Natural killer cell (primary cell): ENCODE measurements at regions of chr22 and their contacts with region 1.

Region 1: GRCh38 chr22:29040385-29041275 is 21.0 kb downstream of the C22orf31 start:
- DNase-seq: peak; percentile 45 to 87
- ATAC-seq: peak; percentile 83 to 89 (median 87)
- H3K4me3 ChIP-seq: no peak overlapping the region
- H3K4me3 Mint-ChIP-seq: no peak overlapping the region
- H3K27ac ChIP-seq: no peak overlapping the region
- H3K27ac Mint-ChIP-seq: no peak overlapping the region
- H3K4me1 ChIP-seq: no peaks in the 10 kb centered on the region
- H3K4me1 Mint-ChIP-seq: peaks cover 0 to 14% of the 10 kb centered on the region in 2 donors
- H3K27me3 ChIP-seq: no peaks in the 10 kb centered on the region
- H3K27me3 Mint-ChIP-seq: peaks cover 15 to 16% of the 10 kb centered on the region in 2 donors
- CTCF ChIP-seq: peak; percentile 97

Region 2: GRCh38 chr22:28019881-28020871 is 1020.5 kb before region 1 on chr22:
- intact Hi-C with region 1: loop called (anchors 10 kb)
- DNase-seq: peak; percentile 52 to 74
- ATAC-seq: peak; percentile 67 to 90 (median 80)
- H3K4me3 ChIP-seq: no peak overlapping the region
- H3K4me3 Mint-ChIP-seq: no peak overlapping the region
- H3K27ac ChIP-seq: no peak overlapping the region
- H3K27ac Mint-ChIP-seq: peak overlapping the region in 1 of 2 donors; percentile 47
- H3K4me1 ChIP-seq: no peaks in the 10 kb centered on the region
- H3K4me1 Mint-ChIP-seq: peaks cover 5 to 6% of the 10 kb centered on the region in 2 donors
- H3K27me3 ChIP-seq: no peaks in the 10 kb centered on the region
- H3K27me3 Mint-ChIP-seq: peaks cover 0 to 3% of the 10 kb centered on the region in 2 donors
- CTCF ChIP-seq: peak; percentile 76

Region 3: DNA sequence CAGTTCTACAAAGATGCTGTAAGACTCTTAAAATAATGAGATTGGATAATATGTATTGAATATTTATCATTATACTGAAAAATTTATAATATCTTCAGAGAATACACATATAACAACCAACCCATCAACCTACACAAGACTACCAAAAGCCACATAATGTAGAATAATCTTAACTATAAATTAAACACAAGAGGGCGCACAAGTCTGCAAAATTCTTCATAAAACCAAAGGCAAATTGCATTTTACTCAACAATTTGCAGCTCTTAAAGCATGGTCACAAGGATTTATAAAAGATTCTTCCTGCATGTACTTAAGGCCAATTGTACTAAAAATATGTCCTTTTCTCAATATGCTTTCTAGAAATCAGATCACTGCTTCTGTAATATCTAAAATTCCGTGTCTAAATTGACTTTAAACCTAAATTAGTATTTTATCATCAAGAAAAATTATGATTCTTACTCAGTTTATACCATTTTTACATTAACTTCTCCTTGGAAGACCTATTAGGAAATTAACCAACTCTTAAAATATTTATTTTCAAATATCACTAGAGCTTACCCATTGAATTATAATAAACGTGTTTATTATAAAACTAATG is 440.0 kb before region 1 on chr22:
- intact Hi-C with region 1: loop called (anchors 1 kb)
- DNase-seq: peak in 1 of 2 donors; percentile 73
- ATAC-seq: peak in 2 of 3 donors; percentile 34 to 53
- H3K4me3 ChIP-seq: no peak overlapping the region
- H3K4me3 Mint-ChIP-seq: no peak overlapping the region
- H3K27ac ChIP-seq: no peak overlapping the region
- H3K27ac Mint-ChIP-seq: no peak overlapping the region
- H3K4me1 ChIP-seq: no peaks in the 10 kb centered on the region
- H3K4me1 Mint-ChIP-seq: no peaks in the 10 kb centered on the region
- H3K27me3 ChIP-seq: peaks cover 2% of the 10 kb centered on the region
- H3K27me3 Mint-ChIP-seq: peaks cover 9 to 11% of the 10 kb centered on the region in 2 donors
- CTCF ChIP-seq: peak; percentile 78

Region 4: GRCh38 chr22:28855355-28856094 is 185.1 kb before region 1 on chr22:
- intact Hi-C with region 1: loop called (anchors 1 kb)
- DNase-seq: peak; percentile 19 to 82
- ATAC-seq: peak; percentile 62 to 69 (median 68)
- H3K4me3 ChIP-seq: no peak overlapping the region
- H3K4me3 Mint-ChIP-seq: no peak overlapping the region
- H3K27ac ChIP-seq: no peak overlapping the region
- H3K27ac Mint-ChIP-seq: no peak overlapping the region
- H3K4me1 ChIP-seq: no peaks in the 10 kb centered on the region
- H3K4me1 Mint-ChIP-seq: no peaks in the 10 kb centered on the region
- H3K27me3 ChIP-seq: no peaks in the 10 kb centered on the region
- H3K27me3 Mint-ChIP-seq: peaks cover 7 to 8% of the 10 kb centered on the region in 2 donors
- CTCF ChIP-seq: peak; percentile 89

Region 5: GRCh38 chr22:29359469-29359868 is 318.8 kb after region 1 on chr22:
- intact Hi-C with region 1: no loop called
- DNase-seq: no peak
- ATAC-seq: no peak
- H3K4me3 ChIP-seq: no peak overlapping the region
- H3K4me3 Mint-ChIP-seq: no peak overlapping the region
- H3K27ac ChIP-seq: no peak overlapping the region
- H3K27ac Mint-ChIP-seq: peak overlapping the region in 1 of 2 donors; percentile 40
- H3K4me1 ChIP-seq: no peaks in the 10 kb centered on the region
- H3K4me1 Mint-ChIP-seq: no peaks in the 10 kb centered on the region
- H3K27me3 ChIP-seq: no peaks in the 10 kb centered on the region
- H3K27me3 Mint-ChIP-seq: no peaks in the 10 kb centered on the region
- CTCF ChIP-seq: no peak